ENCODE measurements at regions of chr13 and their contacts with region 1.

Region 1: GRCh38 chr13:53126841-53127245 is 98.2 kb downstream of the OLFM4 start:
- DNase-seq: no peak
- H3K4me3 ChIP-seq: no peak overlapping the region
- H3K27ac ChIP-seq: no peak overlapping the region
- H3K4me1 ChIP-seq: no peaks in the 10 kb centered on the region
- H3K27me3 ChIP-seq: no peaks in the 10 kb centered on the region
- CTCF ChIP-seq: no peak

Region 2: GRCh38 chr13:52862358-52863206 is 264.3 kb before region 1 on chr13:
- CTCF ChIA-PET with region 1: interaction called, 11 read pairs
- POLR2A ChIA-PET with region 1: no interaction called
- intact Hi-C with region 1: no loop called
- DNase-seq: peak in 1 of 2 experiments; percentile 14
- H3K4me3 ChIP-seq: no peak overlapping the region
- H3K27ac ChIP-seq: no peak overlapping the region
- H3K4me1 ChIP-seq: no peaks in the 10 kb centered on the region
- H3K27me3 ChIP-seq: peaks cover 2% of the 10 kb centered on the region; the same call in 1 of the 2 replicates
- CTCF ChIP-seq: peak; percentile 70

Measured in PC-9 (cell line).